ENCODE measurements at regions of chr1 and their contacts with region 1.

Region 1: GRCh38 chr1:154669464-154670282 is 61.7 kb upstream of the ADAR start:
- DNase-seq: peak; percentile 86
- CTCF ChIP-seq: peak; percentile 97

Region 2: GRCh38 chr1:154520333-154520732 is 149.3 kb before region 1 on chr1:
- CTCF ChIA-PET with region 1: no interaction called
- POLR2A ChIA-PET with region 1: no interaction called
- DNase-seq: no peak
- CTCF ChIP-seq: no peak

Region 3: GRCh38 chr1:154657556-154657955 is 12.1 kb before region 1 on chr1:
- CTCF ChIA-PET with region 1: interaction called, 15 read pairs
- POLR2A ChIA-PET with region 1: no interaction called
- DNase-seq: no peak
- CTCF ChIP-seq: no peak

Region 4: GRCh38 chr1:154863315-154864174 is 193.9 kb after region 1 on chr1:
- CTCF ChIA-PET with region 1: interaction called, 17 read pairs
- POLR2A ChIA-PET with region 1: no interaction called
- DNase-seq: peak; percentile 73
- CTCF ChIP-seq: peak; percentile 80

Region 5: GRCh38 chr1:154878371-154879022 is 208.8 kb after region 1 on chr1:
- CTCF ChIA-PET with region 1: interaction called, 62 read pairs
- POLR2A ChIA-PET with region 1: no interaction called
- DNase-seq: peak; percentile 84
- CTCF ChIP-seq: peak; percentile 88

Region 6: DNA sequence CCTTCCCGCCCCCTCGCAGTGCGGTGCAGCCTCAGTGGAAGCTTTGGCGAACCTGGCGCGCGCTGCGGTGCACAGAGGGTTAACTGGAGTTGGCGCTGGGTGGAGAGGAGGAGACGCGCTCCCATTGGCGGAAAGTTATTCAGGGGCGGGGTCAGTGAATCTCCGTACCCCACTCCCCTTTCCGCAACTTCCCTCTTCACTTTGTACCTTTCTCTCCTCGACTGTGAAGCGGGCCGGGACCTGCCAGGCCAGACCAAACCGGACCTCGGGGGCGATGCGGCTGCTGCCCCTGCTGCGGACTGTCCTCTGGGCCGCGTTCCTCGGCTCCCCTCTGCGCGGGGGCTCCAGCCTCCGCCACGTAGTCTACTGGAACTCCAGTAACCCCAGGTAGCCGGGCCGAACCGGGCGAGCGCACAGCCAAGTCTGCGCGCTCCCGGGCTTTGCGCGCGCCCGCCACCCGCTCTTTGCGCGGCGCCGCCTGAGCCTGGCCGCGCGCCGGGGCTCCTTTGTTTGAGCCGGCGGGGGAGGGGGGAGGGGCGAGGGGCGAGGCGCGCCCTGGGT is 394.0 kb after region 1 on chr1 and contains the start of gene EFNA4:
- CTCF ChIA-PET with region 1: interaction called, 21 read pairs
- POLR2A ChIA-PET with region 1: no interaction called
- DNase-seq: peak; percentile 91
- CTCF ChIP-seq: no peak

Measured in GM10248 (cell line).